ENCODE measurements at regions of chr5 and their contacts with region 1.

Region 1: DNA sequence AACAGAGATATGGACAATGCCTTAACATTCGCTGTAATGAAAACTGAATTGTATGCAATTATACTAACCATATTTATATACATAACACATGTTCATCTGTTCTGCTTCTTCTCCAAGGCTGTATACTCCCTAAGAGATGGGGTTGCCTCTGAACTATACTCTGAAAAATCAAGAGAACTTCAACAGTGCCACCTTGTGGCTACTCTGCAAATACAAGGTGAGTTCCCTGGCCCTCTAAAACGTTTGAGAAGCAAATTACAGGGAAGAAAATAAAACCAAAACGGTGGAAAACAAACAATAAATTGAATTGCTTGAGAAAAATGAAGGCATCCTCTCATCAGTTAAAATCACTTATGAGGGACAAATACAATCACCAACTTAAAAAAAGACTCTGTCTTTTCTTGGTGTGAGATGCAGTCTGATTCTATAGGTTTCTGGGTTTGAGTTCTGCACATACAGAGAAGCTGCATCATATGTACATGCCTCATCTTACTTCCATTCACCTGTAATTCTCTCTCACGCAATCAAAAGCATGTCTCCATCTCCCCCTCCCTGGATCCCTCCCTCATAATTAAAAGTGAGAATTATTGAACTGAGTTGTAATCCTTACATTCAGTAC is 98.6 kb downstream of the FBXW11 start:
- DNase-seq: peak; percentile 46
- H3K4me3 Mint-ChIP-seq: no peak overlapping the region
- H3K27ac Mint-ChIP-seq: peak overlapping the region; percentile 74
- H3K4me1 Mint-ChIP-seq: peaks cover 60% of the 10 kb centered on the region
- H3K27me3 Mint-ChIP-seq: no peaks in the 10 kb centered on the region

Region 2: GRCh38 chr5:171534043-171534895 is 373.6 kb before region 1 on chr5:
- CTCF ChIA-PET with region 1: no interaction called
- POLR2A ChIA-PET with region 1: no interaction called
- intact Hi-C with region 1: loop called (anchors 1 kb)
- DNase-seq: peak; percentile 47
- H3K4me3 Mint-ChIP-seq: no peak overlapping the region
- H3K27ac Mint-ChIP-seq: no peak overlapping the region
- H3K4me1 Mint-ChIP-seq: peaks cover 6% of the 10 kb centered on the region
- H3K27me3 Mint-ChIP-seq: peaks cover 11% of the 10 kb centered on the region

Region 3: DNA sequence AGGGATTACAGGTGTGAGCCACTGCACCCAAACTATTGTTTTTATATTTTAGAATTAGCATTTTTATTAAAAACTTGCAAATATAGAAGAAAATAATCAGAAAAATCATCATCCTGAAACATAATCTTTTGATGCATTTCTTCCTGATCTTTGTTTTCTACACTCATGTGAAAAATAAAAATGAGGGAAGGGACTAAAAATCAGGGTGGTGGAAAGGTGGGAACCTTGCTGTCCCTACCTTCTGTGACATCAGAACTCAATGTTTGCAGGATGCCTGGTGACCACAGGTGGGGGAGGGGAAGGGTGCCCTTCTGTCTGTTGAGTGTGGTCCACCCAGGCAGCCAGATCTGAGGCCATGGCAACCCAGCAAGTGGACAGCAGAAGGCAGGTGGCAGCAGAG is 122.3 kb before region 1 on chr5 and contains the start of gene SMIM23:
- CTCF ChIA-PET with region 1: no interaction called
- POLR2A ChIA-PET with region 1: no interaction called
- intact Hi-C with region 1: no loop called
- DNase-seq: no peak
- H3K4me3 Mint-ChIP-seq: no peak within 1 kb of the TSS
- H3K27ac Mint-ChIP-seq: no peak within 1 kb of the TSS
- H3K4me1 Mint-ChIP-seq: no peaks in the 10 kb centered on the region
- H3K27me3 Mint-ChIP-seq: peaks cover 12% of the 10 kb centered on the region
- total RNA-seq, gene SMIM23: not detected

Region 4: DNA sequence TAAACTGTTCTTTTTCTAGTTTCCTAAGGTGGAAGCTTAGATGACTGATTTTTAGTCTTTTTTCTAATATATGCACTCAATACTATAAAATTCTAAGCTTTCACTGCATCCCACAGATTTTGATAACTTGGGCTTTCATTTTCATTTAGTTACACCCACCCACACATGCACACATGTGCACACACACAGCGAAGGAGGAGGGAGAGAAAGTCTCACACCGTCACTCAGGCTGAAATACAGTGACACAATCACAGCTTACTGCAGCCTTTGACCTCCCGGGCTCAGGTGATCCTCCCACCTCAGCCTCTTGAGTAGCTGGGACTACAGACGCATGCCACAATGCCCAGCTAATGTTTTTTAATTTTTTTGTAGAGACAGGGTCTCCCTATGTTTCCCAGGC is 25.7 kb before region 1 on chr5:
- CTCF ChIA-PET with region 1: interaction called, 6 read pairs
- POLR2A ChIA-PET with region 1: interaction called, 3 read pairs
- intact Hi-C with region 1: loop called (anchors 1 kb)
- DNase-seq: peak; percentile 59
- H3K4me3 Mint-ChIP-seq: no peak overlapping the region
- H3K27ac Mint-ChIP-seq: no peak overlapping the region
- H3K4me1 Mint-ChIP-seq: peaks cover 22% of the 10 kb centered on the region
- H3K27me3 Mint-ChIP-seq: no peaks in the 10 kb centered on the region

Region 5: GRCh38 chr5:171984748-171985419 is 77.0 kb after region 1 on chr5:
- CTCF ChIA-PET with region 1: interaction called, 4 read pairs
- POLR2A ChIA-PET with region 1: interaction called, 10 read pairs
- intact Hi-C with region 1: loop called (anchors 1 kb)
- DNase-seq: peak; percentile 69
- H3K4me3 Mint-ChIP-seq: no peak overlapping the region
- H3K27ac Mint-ChIP-seq: peak overlapping the region; percentile 52
- H3K4me1 Mint-ChIP-seq: peaks cover 54% of the 10 kb centered on the region
- H3K27me3 Mint-ChIP-seq: no peaks in the 10 kb centered on the region

Region 6: GRCh38 chr5:172223901-172224873 is 316.4 kb after region 1 on chr5:
- CTCF ChIA-PET with region 1: no interaction called
- POLR2A ChIA-PET with region 1: no interaction called
- intact Hi-C with region 1: loop called (anchors 1 kb)
- DNase-seq: peak; percentile 84
- H3K4me3 Mint-ChIP-seq: no peak overlapping the region
- H3K27ac Mint-ChIP-seq: peak overlapping the region; percentile 70
- H3K4me1 Mint-ChIP-seq: peaks cover 33% of the 10 kb centered on the region
- H3K27me3 Mint-ChIP-seq: peaks cover 4% of the 10 kb centered on the region